PC-3 (cell line): ENCODE measurements at regions of chr11 and their contacts with region 1.

Region 1: DNA sequence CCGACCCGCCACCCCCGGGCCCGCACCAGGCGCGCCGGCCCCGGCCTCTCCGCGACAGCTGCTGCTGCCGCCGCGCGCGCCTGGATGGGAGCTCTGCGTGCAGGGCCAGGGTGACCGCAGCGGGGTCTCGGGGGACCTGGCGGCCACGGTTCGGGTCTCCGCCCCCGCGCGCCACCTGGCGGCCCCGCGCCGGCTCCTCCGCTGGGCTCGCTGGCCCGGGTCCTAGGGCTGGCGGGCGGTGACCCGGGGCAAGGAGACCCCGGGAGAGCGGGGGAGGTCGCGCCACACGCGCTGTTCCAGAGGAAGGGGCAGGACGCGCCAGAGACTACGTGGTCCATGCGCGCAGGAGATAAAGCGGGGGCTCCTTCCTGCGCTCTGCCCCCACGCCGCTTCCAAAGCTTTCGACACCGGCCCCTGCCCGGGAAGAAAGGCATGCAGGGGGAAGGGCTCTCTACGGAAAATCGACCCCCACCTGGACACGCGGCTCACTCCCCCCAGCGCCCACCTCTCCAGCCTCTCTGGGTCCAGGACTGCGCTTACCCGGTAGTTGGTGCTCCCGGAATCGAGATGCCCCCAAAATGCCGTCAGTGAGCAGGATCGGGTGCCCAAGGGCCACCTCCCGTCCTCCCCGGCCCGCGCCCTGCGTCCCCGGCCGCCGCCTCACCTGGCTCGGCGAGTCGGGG is 475 bp downstream of the SHANK2 start:
- DNase-seq: peak; percentile 59
- ATAC-seq: peak; percentile 36
- H3K4me3 ChIP-seq: peak overlapping the region; percentile 95
- H3K27ac ChIP-seq: peak overlapping the region; percentile 82
- H3K4me1 ChIP-seq: peaks cover 20% of the 10 kb centered on the region
- H3K27me3 ChIP-seq: no peaks in the 10 kb centered on the region
- CTCF ChIP-seq: peak; percentile 61

Region 2: GRCh38 chr11:71086675-71087258 is 165.1 kb before region 1 on chr11:
- CTCF ChIA-PET with region 1: interaction called, 7 read pairs
- POLR2A ChIA-PET with region 1: no interaction called
- intact Hi-C with region 1: loop called (anchors 2 kb)
- DNase-seq: peak; percentile 63
- ATAC-seq: peak; percentile 81
- H3K4me3 ChIP-seq: no peak overlapping the region
- H3K27ac ChIP-seq: no peak overlapping the region
- H3K4me1 ChIP-seq: no peaks in the 10 kb centered on the region
- H3K27me3 ChIP-seq: no peaks in the 10 kb centered on the region
- CTCF ChIP-seq: peak; percentile 87

Region 3: DNA sequence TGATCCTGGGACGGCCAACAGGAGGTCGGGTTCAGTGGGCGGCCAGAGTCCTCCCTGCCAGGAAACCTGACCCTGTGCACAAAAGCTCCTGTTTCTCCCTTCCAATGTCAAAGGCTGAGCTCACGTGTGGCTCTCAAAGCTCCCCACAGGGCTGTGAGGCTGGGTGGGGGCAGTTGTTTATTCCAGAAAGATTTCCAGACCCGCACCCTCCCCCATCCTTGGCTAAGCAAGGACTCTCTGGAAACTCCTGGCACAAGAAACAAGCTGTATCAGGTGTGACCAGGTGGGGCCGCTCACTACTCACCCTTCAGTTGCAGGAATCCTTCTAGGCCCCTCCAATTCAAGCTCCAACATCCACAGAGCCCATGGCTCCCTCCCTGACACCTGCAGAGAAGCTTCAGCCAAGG is 131.4 kb before region 1 on chr11:
- CTCF ChIA-PET with region 1: interaction called, 4 read pairs
- POLR2A ChIA-PET with region 1: no interaction called
- intact Hi-C with region 1: loop called (anchors 1 kb)
- DNase-seq: peak; percentile 67
- ATAC-seq: peak; percentile 78
- H3K4me3 ChIP-seq: no peak overlapping the region
- H3K27ac ChIP-seq: no peak overlapping the region
- H3K4me1 ChIP-seq: 0 out of 2 replicates have a peak, but pooled peaks cover 7% of the 10 kb centered on the region
- H3K27me3 ChIP-seq: no peaks in the 10 kb centered on the region
- CTCF ChIP-seq: peak; percentile 69

Region 4: DNA sequence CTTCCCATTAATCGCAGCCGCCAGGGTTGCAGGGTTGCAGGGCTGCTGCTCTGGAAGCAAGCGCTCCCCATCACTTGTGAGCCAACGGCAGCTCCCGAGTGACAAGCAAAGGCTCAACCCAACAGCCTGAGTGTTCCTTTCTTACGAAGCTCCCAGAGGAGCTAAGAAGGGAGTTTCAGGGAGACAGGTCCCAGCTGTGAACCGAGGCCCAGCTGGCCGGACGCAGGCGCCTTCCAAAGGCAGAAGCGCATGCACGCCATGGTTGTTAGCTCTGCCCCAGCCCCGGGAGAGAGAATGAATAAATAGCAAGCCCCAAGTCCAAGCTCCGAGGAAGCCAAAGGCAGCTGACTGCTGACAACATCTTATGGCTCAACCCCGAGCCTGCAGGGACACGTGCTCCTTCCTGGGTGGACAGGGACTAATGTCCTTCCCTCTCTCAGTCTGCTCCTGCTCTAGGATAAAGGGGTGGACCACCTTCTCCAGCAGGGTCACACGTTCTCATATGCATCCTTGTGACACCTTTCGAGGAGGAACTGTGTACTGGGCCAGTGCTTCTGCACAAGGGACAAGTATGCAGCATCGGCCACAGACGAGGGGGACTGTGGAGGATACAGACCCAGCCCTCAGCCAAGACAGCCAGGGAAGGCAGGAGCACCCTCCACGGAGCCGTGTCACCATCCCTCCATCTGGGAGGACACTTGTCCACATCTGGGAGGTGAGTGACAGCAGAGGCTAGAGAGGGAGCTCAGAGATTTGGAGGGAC is 29.4 kb before region 1 on chr11:
- CTCF ChIA-PET with region 1: no interaction called
- POLR2A ChIA-PET with region 1: no interaction called
- intact Hi-C with region 1: no loop called
- DNase-seq: no peak
- ATAC-seq: no peak
- H3K4me3 ChIP-seq: no peak overlapping the region
- H3K27ac ChIP-seq: no peak overlapping the region
- H3K4me1 ChIP-seq: no peaks in the 10 kb centered on the region
- H3K27me3 ChIP-seq: no peaks in the 10 kb centered on the region
- CTCF ChIP-seq: no peak

Region 5: DNA sequence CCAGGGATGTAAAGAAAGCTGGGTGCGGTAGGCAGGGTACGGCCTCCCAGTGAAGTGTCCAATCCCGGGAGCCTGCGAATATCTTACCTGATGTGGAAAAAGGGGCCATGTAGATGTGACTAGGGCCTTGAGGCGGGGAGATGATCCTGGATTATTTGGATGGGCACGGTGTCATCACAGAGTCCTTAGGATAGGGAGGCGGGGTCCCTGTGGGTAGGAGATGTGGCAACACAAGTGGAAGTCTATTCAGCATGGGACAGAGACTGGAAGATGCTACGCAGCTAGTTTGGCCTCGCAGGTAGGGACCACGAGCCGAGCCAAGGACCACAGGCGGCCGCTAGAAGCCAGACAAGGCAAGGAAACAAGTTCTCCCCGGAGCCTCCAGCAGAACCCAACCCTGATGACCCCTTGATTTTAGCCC is 46.9 kb after region 1 on chr11:
- CTCF ChIA-PET with region 1: interaction called, 5 read pairs
- POLR2A ChIA-PET with region 1: interaction called, 6 read pairs
- intact Hi-C with region 1: loop called (anchors 1 kb)
- DNase-seq: no peak
- ATAC-seq: no peak; the same call in 1 of the 2 replicates
- H3K4me3 ChIP-seq: peak overlapping the region; percentile 13; the same call in 1 of the 2 replicates
- H3K27ac ChIP-seq: peak overlapping the region; percentile 84
- H3K4me1 ChIP-seq: peaks cover 34% of the 10 kb centered on the region
- H3K27me3 ChIP-seq: no peaks in the 10 kb centered on the region
- CTCF ChIP-seq: no peak

Region 6: GRCh38 chr11:71329165-71329510 is 77.2 kb after region 1 on chr11:
- CTCF ChIA-PET with region 1: interaction called, 45 read pairs
- POLR2A ChIA-PET with region 1: no interaction called
- intact Hi-C with region 1: loop called (anchors 2 kb)
- DNase-seq: no peak
- ATAC-seq: no peak; the same call in 1 of the 2 replicates
- H3K4me3 ChIP-seq: no peak overlapping the region
- H3K27ac ChIP-seq: no peak overlapping the region
- H3K4me1 ChIP-seq: no peaks in the 10 kb centered on the region
- H3K27me3 ChIP-seq: no peaks in the 10 kb centered on the region
- CTCF ChIP-seq: no peak

Region 7: DNA sequence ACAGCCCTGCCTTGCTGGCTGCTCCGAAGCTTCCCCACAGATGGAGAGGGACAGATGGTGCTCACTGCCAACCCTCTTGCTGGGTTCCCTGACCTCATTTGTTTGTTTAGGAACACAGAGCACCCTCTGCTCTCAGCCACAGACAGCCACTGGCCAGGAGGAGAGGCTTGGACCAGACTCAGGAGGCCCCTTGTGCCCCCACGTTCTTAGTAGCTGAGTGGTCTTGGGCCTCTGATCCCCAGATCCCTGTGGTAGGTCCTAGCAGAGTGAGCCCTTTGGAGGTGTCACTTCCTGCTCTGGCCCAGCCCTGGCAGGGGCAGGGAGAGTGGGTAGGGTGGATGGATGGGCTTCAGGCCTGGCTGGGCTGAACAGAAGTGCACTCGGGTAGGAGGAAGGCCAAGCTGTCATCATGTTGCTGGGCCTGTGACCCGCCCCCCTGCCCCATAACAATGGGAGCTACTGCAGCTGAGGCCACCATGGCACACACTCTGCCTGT is 112.3 kb after region 1 on chr11:
- CTCF ChIA-PET with region 1: no interaction called
- POLR2A ChIA-PET with region 1: no interaction called
- intact Hi-C with region 1: no loop called
- DNase-seq: no peak
- ATAC-seq: no peak
- H3K4me3 ChIP-seq: no peak overlapping the region
- H3K27ac ChIP-seq: no peak overlapping the region
- H3K4me1 ChIP-seq: no peaks in the 10 kb centered on the region
- H3K27me3 ChIP-seq: peaks cover 11% of the 10 kb centered on the region; the same call in 1 of the 2 replicates
- CTCF ChIP-seq: no peak

Region 8: GRCh38 chr11:71423181-71423790 is 171.4 kb after region 1 on chr11:
- CTCF ChIA-PET with region 1: no interaction called
- POLR2A ChIA-PET with region 1: no interaction called
- intact Hi-C with region 1: no loop called
- DNase-seq: peak; percentile 46
- ATAC-seq: peak; percentile 29
- H3K4me3 ChIP-seq: no peak overlapping the region
- H3K27ac ChIP-seq: no peak overlapping the region
- H3K4me1 ChIP-seq: peaks cover 34% of the 10 kb centered on the region
- H3K27me3 ChIP-seq: no peaks in the 10 kb centered on the region
- CTCF ChIP-seq: no peak

Region 9: DNA sequence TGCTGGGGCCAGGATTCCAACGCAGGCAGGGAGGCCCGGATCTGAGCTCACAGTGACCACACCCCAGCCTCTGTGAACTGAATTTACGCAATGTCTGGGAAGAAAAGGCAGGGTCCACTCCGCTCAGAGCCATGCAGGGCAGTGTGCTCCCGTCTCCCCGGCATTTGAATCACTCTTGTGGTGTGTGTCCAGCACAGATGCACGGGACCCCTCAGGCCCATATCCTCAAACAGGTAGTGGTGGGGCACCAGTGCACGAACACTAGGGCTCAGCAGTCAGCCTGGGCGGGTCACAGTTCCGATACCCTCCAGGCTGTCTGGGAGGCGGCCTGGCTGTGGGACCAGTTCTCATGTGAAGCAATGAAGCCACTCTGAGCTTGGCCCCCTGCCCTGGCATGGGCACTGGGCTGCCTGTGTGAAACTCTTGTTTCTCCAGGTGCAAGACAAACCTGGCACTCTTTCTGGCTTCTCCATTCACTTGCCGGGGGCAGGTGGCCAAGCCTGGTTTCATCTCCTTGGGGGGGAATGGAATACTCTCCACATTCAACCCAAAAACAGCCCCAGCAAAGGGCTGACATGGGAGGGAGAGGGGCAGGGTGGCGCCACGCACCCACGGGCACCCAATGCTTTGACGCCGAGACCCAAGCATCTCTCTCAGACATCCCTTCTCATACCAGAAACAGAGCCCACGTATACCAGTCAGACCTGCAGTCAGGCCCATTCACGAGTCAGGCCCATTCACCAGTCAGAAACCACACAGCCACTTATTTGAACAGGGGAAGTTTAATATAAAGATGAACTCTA is 181.9 kb after region 1 on chr11:
- CTCF ChIA-PET with region 1: no interaction called
- POLR2A ChIA-PET with region 1: no interaction called
- intact Hi-C with region 1: no loop called
- DNase-seq: no peak
- ATAC-seq: no peak
- H3K4me3 ChIP-seq: no peak overlapping the region
- H3K27ac ChIP-seq: no peak overlapping the region
- H3K4me1 ChIP-seq: peaks cover 12% of the 10 kb centered on the region
- H3K27me3 ChIP-seq: no peaks in the 10 kb centered on the region
- CTCF ChIP-seq: no peak

Region 10: GRCh38 chr11:71453037-71453898 is 201.4 kb after region 1 on chr11 and contains the start of gene NADSYN1:
- CTCF ChIA-PET with region 1: interaction called, 13 read pairs
- POLR2A ChIA-PET with region 1: no interaction called
- intact Hi-C with region 1: no loop called
- DNase-seq: peak; percentile 98
- ATAC-seq: peak; percentile 69
- H3K4me3 ChIP-seq: peak within 1 kb of the TSS; percentile 99
- H3K27ac ChIP-seq: peak within 1 kb of the TSS; percentile 62
- H3K4me1 ChIP-seq: peaks cover 23% of the 10 kb centered on the region
- H3K27me3 ChIP-seq: no peaks in the 10 kb centered on the region
- CTCF ChIP-seq: no peak
- total RNA-seq, gene NADSYN1: 64.8 and 70.7 TPM in 2 replicates